ENCODE measurements at regions of chr3 and their contacts with region 1.

Region 1: DNA sequence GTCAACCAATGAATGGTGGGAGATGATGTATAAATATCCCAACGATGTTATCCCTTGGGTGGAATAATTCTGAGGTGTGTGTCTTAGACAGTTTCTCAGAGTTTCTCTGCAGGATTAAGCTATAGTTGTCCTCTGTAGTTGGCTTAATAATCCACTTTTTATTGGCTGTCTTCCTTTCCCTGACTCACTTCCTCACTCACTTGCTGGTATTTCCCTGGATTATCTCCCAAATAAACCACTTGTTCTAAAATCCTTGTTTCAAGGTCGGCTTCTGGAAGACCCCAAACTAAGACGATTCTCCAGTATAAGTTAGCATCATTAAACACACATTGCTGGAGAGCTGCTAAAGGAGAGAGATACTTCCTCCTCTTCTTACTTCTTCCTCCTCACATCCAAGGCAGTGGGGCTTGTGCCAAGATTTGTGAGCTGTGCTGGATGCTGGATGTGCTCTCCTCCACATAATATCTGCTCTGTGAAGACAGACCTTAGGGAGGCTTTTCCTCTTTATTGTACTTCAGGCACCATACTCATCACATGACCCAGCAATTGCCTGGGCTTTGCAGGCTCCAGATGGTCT is 22.5 kb upstream of the ROPN1 start:
- DNase-seq: peak; percentile 27
- ATAC-seq: peak in 1 of 2 donors; percentile 56

Region 2: DNA sequence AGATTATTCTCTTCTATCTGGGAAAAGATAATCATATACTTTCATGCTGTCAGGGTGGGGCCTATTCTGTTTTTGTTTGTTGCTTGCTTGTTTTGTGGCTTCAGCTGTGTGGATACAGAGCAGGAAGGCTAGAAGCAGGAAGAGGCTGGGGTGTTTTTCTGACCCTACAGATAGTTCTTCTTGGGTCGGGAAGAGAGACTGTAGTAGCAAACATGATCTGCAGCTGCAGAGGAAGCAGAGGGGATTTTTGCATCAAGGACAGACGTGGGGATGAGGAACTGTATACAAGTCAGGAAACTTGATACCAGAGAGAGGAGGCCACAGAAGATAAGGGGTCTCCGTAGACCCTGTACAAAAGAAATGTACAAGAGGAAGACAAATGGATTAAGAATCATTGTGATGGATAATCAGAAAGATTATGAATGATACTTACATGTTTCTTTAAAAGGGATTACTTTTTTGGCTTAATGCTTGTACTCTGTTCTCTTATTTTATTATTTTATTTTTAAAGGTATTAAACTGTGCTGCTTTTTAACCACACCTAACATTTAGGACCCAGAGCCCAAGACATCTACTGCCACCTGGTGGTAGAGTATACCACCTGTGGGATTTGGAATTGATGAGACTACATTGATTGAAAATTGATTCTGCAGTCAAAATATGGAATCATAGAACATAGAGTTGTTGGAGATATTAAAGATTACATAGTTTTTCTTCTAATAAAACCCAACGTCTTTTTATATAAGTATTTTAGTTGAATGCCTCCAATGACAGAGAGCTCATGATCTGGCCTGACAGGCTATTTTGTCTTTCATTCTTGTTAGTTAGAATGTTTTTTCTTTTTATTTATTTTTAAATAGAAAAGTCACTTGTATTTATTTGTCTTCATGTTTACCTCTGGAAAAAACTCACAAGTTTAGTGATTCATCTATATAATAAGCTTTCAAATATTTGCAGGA is 64.8 kb after region 1 on chr3:
- intact Hi-C with region 1: loop called (anchors 5 kb)
- DNase-seq: no peak
- ATAC-seq: peak; percentile 30 to 42

Region 3: DNA sequence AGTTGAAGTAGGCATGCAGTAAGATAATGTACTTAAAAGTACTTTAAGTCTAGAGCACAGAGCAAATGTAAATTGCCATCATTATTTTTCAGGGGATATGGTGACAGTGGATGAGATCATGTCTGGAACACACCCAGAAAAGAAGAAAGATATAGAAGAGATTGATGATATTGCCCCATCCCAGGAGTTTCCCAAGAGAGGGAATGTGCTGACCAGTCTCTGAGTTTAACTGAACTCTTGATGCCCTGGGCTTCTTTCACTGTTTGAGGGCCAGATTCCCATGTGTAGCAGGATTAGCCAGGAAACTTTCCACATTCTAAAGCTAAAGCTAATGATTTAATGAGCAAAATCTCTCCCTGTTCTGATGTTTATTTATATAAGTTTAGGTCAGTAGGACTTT is 349.0 kb after region 1 on chr3:
- intact Hi-C with region 1: no loop called
- DNase-seq: no peak
- ATAC-seq: peak in 1 of 2 donors; percentile 67

Region 4: DNA sequence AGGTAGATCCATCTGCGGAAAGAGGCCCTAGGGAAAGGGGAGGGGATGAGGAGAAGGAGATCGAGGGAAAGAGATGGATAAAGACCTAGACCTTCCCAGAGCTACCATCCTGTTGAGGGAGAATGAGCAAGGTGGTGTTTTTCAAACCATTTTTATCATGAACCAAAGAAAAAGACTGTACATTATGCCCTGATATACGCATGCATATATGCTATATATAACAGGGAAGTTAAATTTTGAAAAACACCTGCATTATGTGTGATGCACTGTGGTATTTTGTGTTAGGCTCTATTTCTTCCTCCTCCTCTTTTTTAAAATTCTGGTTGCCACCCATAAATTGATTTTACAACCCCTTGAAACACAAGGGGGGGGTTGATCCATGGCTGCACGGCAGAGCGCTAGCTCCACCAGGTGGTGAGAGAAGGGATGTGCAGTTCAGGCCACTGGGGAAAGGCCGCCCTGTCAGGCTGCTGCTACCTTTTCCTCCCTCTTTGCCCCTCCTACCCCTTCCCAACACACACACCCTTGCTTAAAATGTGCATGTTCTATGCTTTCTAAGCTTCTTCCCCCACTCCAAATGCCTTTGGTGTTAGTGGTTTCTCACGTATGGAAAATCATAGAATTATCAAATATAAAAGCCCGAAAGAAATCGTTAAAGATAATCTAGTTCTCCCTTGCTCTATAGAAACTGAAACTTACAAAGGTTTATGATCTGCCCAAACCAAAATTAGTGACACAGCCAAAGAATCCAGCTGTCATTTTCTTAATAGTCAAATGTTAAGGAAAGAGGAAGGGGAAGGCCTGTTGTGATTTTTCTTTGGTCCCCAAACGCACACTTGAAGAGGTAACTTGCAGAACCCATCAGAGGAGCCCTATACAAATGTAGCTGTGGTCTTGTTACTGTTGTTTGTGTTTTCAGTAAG is 453.8 kb after region 1 on chr3:
- intact Hi-C with region 1: loop called (anchors 2 to 10 kb)
- DNase-seq: peak; percentile 44
- ATAC-seq: peak; percentile 65 to 78